HEK293 (cell line): ENCODE measurements at regions of chr12 and their contacts with region 1.

Region 1: GRCh38 chr12:49188914-49189367 is at the start of gene TUBA1A:
- H3K4me3 ChIP-seq: peak within 1 kb of the TSS; percentile 86
- H3K27ac ChIP-seq: peak within 1 kb of the TSS; percentile 94
- H3K4me1 ChIP-seq: peaks cover 6% of the 10 kb centered on the region; the same call in 1 of the 2 replicates
- CTCF ChIP-seq: no peak

Region 2: DNA sequence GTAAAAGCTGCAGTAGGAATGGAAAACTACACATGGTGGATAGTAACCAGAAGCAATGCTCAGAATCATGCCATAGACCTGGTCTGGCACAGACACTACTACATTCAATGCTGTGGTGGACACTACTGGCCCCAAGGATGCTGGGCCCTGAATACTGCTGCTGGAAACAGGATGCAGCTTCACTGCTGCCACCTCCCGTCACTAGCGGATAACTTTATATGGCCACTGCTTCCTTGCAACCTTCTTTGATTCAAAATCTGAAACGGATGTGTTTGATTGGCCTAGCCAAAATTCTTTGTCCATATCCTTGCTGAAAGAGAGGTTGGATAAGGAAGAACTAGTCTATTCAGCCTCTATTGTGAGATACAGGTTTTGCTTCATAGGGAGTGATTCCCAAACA is 430.7 kb before region 1 on chr12:
- CTCF ChIA-PET with region 1: no interaction called
- POLR2A ChIA-PET with region 1: no interaction called
- H3K4me3 ChIP-seq: no peak overlapping the region
- H3K27ac ChIP-seq: no peak overlapping the region
- H3K4me1 ChIP-seq: no peaks in the 10 kb centered on the region
- CTCF ChIP-seq: no peak

Region 3: GRCh38 chr12:49174218-49174617 is 14.7 kb before region 1 on chr12:
- CTCF ChIA-PET with region 1: no interaction called
- POLR2A ChIA-PET with region 1: interaction called, 11 read pairs
- H3K4me3 ChIP-seq: no peak overlapping the region
- H3K27ac ChIP-seq: no peak overlapping the region
- H3K4me1 ChIP-seq: no peaks in the 10 kb centered on the region
- CTCF ChIP-seq: no peak

Region 4: GRCh38 chr12:49200919-49201594 is 12.1 kb after region 1 on chr12:
- CTCF ChIA-PET with region 1: interaction called, 3 read pairs
- POLR2A ChIA-PET with region 1: interaction called, 25 read pairs
- H3K4me3 ChIP-seq: no peak overlapping the region
- H3K27ac ChIP-seq: no peak overlapping the region
- H3K4me1 ChIP-seq: peaks cover 17% of the 10 kb centered on the region
- CTCF ChIP-seq: no peak

Region 5: GRCh38 chr12:49219417-49220026 is 30.6 kb after region 1 on chr12:
- CTCF ChIA-PET with region 1: interaction called, 3 read pairs
- POLR2A ChIA-PET with region 1: interaction called, 15 read pairs
- H3K4me3 ChIP-seq: no peak overlapping the region
- H3K27ac ChIP-seq: no peak overlapping the region
- H3K4me1 ChIP-seq: peaks cover 7% of the 10 kb centered on the region
- CTCF ChIP-seq: no peak

Region 6: DNA sequence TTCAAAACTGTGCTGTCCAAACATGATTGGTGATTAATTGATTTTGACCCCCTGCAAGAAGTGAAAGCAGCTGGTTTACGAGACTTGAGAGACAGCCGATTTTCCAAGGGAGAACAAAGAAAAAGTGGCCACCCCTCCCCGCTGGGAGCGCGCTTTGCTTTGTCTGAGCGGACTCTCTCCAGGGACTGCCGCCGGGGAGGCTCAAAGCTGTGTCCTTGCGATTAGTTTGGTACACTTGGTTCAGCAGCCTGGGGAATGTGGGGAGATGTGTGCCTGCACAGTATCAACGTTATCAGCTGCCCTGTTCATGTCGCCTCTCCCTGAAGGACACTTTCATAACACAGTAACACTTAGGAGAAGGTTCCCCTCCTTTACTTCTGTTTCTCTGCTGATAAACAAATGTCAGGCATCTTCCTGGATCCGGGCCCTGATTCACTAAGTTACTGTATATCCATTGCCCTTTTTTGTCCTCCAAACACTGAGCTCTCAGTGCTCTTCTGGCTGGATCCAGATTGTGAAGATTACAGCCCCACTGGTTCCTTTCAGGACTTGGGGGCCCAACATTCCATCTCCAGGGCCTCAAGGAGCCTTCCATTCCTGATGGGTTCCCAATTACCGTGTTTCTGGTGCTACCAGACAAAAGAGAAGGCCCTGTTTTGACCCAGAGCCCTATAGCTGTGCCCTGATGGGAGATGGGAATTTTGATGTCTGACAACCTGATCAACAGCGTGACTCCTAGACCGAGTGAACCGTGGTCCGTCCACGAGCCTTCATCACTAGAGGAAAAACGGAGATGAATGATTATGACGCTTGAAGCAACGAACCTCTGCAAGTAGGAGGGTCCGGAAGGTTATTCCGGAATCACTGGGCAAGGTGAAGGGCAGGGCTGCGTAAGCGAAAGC is 44.2 kb after region 1 on chr12:
- CTCF ChIA-PET with region 1: interaction called, 13 read pairs
- POLR2A ChIA-PET with region 1: interaction called, 8 read pairs
- H3K4me3 ChIP-seq: no peak overlapping the region
- H3K27ac ChIP-seq: peak overlapping the region; percentile 6; the same call in 1 of the 2 replicates
- H3K4me1 ChIP-seq: peaks cover 2% of the 10 kb centered on the region; the same call in 1 of the 2 replicates
- CTCF ChIP-seq: peak; percentile 54; the same call in 1 of the 2 replicates